ENCODE measurements at regions of chr6 and their contacts with region 1.

Region 1: GRCh38 chr6:25061289-25061936 is 125.7 kb upstream of the RIPOR2 start:
- DNase-seq: peak in 1 of 5 donors; percentile 28
- ATAC-seq: peak in 1 of 4 donors; percentile 26
- H3K4me3 ChIP-seq: no peak overlapping the region
- H3K27ac ChIP-seq: peak overlapping the region in 2 of 12 donors; percentile 3 to 23
- H3K4me1 ChIP-seq: peaks cover 0 to 35% (median 0%) of the 10 kb centered on the region in 12 donors
- H3K27me3 ChIP-seq: no peaks in the 10 kb centered on the region
- CTCF ChIP-seq: no peak
- POLR2A ChIP-seq: no peak

Region 2: DNA sequence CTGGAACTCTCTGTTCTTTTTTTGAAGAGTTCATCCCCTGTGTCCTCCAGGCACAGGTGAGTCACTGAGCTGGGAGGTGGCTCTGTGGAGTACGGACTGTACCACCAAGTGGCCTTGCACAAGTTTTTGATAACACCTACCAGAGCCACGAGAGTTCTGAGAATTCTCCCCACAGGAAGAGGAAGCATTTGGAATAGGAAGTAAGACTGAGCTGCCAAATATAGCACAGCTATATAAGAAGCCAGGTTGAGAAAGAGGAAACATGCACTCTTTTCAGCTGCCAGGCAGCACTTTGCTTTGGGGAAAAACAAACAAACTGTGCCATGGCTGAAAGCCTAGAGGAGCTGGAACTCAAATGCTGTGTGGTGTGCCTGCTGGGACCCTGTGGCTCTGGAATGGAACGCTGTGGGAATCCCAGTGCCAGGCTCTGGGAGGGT is 54.8 kb before region 1 on chr6:
- intact Hi-C with region 1: loop called in 1 of 10 experiments (anchors 10 kb)
- DNase-seq: peak in 2 of 5 donors; percentile 25 to 81
- ATAC-seq: peak; percentile 75 to 97 (median 90)
- H3K4me3 ChIP-seq: no peak overlapping the region
- H3K27ac ChIP-seq: peak overlapping the region in 11 of 12 donors; percentile 16 to 89 (median 58)
- H3K4me1 ChIP-seq: peaks cover 0 to 90% (median 6%) of the 10 kb centered on the region in 12 donors
- H3K27me3 ChIP-seq: no peaks in the 10 kb centered on the region
- CTCF ChIP-seq: no peak
- POLR2A ChIP-seq: no peak

Measured in heart left ventricle (tissue), 16 donors.